Right ventricle myocardium inferior (tissue), 1 donor: ENCODE measurements at regions of chr13 and their contacts with region 1.

Region 1: GRCh38 chr13:44237276-44237767 is 136.3 kb upstream of the SERP2 start:
- DNase-seq: no peak
- ATAC-seq: peak; percentile 98

Region 2: DNA sequence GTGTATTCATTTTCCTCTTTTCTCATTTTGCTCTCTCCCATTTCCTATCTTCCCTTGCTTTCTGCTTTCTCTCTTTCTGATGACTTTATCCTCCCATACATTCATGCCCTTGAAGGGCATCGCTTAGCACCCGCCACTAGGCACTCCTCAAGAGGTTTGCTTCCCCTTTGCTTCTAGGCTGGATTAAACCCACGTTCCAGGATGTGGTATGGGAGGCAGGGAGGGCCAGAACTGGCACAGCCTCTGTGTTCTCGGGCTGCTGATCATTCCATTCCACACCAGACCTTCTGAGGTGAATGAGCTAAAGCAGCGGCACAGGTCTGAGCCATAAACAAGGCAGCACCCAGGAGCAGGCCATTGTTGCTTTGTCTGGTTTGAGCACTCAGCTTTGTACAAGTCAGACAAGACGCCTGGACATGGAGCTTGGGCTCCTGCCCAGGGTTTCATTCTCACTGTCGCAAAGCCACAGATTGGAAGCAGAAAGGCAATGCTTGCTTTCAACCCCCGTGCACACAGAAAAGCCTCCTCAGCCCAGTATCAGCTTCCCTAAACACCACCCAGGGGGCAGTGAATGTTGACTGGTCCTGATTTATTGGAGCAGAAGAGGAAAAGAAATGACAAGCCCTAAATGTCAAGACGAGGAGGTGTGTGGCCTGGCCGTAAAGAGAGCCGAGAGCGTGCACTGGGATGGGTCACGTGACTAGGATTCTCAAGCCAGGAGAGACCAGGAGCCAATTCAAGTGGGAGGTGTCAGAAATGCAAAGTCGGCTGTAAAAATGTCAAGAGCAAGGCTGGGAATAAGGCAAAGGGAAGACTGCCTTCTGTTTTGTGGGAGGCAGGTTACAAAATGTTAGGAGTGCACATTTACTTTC is 81.7 kb before region 1 on chr13:
- intact Hi-C with region 1: no loop called
- DNase-seq: peak; percentile 71
- ATAC-seq: peak; percentile 74

Region 3: DNA sequence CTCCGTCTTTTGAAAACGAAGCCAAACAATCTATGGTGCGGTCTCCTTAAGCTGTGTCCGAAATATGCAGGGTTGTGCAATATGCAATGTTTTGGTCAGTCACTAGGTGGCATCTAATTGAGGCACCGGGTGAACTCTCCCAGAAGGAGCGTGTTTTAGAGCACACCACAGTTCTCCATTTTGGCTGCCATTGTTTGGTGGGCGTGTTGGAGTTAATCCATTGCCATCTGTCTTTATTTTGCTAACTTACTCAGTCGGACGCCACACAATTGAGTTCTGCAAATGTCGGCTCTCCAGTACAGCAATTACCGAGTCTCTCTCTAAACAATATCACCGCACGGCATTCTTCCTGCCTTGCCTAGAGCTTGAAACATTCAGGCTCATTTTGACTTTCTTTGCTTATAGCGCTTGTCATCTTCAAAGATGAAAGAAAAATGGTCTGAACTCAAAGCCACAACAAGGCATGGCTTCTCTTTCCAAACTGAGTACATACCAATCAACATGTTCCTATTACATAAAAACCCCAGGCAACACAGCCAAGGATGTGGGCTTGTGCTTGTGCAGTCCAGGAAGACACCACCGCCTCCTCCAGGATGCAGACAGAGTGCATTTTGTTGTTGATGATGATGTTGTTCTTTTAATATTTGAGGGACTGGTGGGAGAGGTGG is 45.7 kb before region 1 on chr13:
- intact Hi-C with region 1: loop called (anchors 2 kb)
- DNase-seq: no peak
- ATAC-seq: peak; percentile 93

Region 4: GRCh38 chr13:44300895-44301638 is 63.7 kb after region 1 on chr13:
- intact Hi-C with region 1: loop called (anchors 5 kb)
- DNase-seq: no peak
- ATAC-seq: peak; percentile 77

Region 5: GRCh38 chr13:44380404-44381165 is 143.3 kb after region 1 on chr13:
- intact Hi-C with region 1: loop called (anchors 5 kb)
- DNase-seq: no peak
- ATAC-seq: no peak